Endothelial cell of umbilical vein (primary cell): ENCODE measurements at regions of chr1 and their contacts with region 1.

Region 1: DNA sequence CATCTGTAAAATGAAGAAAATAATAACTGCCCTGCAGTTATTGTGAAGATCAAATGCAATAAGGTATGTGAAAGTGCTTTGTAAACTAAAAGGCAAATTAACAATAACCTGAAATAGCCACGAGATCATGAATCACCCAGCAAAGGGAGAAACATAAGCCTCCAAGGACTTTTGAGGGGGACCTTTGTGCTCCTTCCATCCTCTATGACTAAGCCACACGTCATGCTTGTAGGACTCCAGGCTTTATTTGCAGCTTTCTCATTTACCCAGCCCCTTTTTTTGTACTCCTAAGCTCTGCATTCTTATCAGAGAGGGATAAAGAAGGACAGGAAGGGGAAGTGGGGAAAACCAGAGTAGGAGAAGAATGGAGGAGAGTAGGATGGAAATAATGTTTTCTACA is 115.1 kb downstream of the PROX1 start:
- DNase-seq: peak; percentile 91
- H3K4me3 ChIP-seq: no peak overlapping the region
- H3K27ac ChIP-seq: peak overlapping the region; percentile 76
- H3K4me1 ChIP-seq: peaks cover 25% of the 10 kb centered on the region
- H3K27me3 ChIP-seq: no peaks in the 10 kb centered on the region
- CTCF ChIP-seq: no peak
- POLR2A ChIP-seq: no peak

Region 2: GRCh38 chr1:213820362-213821149 is 282.4 kb before region 1 on chr1:
- CTCF ChIA-PET with region 1: no interaction called
- POLR2A ChIA-PET with region 1: no interaction called
- dilution Hi-C with region 1: no loop called
- intact Hi-C with region 1: no loop called
- DNase-seq: no peak
- H3K4me3 ChIP-seq: no peak overlapping the region
- H3K27ac ChIP-seq: no peak overlapping the region
- H3K4me1 ChIP-seq: no peaks in the 10 kb centered on the region
- H3K27me3 ChIP-seq: no peaks in the 10 kb centered on the region
- CTCF ChIP-seq: no peak
- POLR2A ChIP-seq: no peak

Region 3: GRCh38 chr1:214072426-214073157 is 30.3 kb before region 1 on chr1:
- CTCF ChIA-PET with region 1: no interaction called
- POLR2A ChIA-PET with region 1: no interaction called
- dilution Hi-C with region 1: no loop called
- intact Hi-C with region 1: loop called (anchors 1 kb)
- DNase-seq: no peak
- H3K4me3 ChIP-seq: no peak overlapping the region
- H3K27ac ChIP-seq: no peak overlapping the region
- H3K4me1 ChIP-seq: peaks cover 5% of the 10 kb centered on the region
- H3K27me3 ChIP-seq: peaks cover 0 to 3% of the 10 kb centered on the region in 2 experiments
- CTCF ChIP-seq: no peak
- POLR2A ChIP-seq: no peak

Region 4: GRCh38 chr1:214116258-214116657 is 13.4 kb after region 1 on chr1:
- CTCF ChIA-PET with region 1: interaction called, 7 read pairs
- POLR2A ChIA-PET with region 1: interaction called, 3 read pairs
- dilution Hi-C with region 1: no loop called
- intact Hi-C with region 1: loop called (anchors 1 kb)
- DNase-seq: peak; percentile 82
- H3K4me3 ChIP-seq: no peak overlapping the region
- H3K27ac ChIP-seq: peak overlapping the region; percentile 20
- H3K4me1 ChIP-seq: peaks cover 16% of the 10 kb centered on the region
- H3K27me3 ChIP-seq: no peaks in the 10 kb centered on the region
- CTCF ChIP-seq: no peak
- POLR2A ChIP-seq: no peak